A673 (cell line): ENCODE measurements at regions of chr3 and their contacts with region 1.

Region 1: GRCh38 chr3:131812421-131812820 is 222.4 kb downstream of the CPNE4 start:
- DNase-seq: peak; percentile 13
- H3K4me3 ChIP-seq: no peak overlapping the region
- H3K27ac ChIP-seq: no peak overlapping the region
- H3K4me1 ChIP-seq: peaks cover 15% of the 10 kb centered on the region
- H3K27me3 ChIP-seq: no peaks in the 10 kb centered on the region
- CTCF ChIP-seq: no peak

Region 2: DNA sequence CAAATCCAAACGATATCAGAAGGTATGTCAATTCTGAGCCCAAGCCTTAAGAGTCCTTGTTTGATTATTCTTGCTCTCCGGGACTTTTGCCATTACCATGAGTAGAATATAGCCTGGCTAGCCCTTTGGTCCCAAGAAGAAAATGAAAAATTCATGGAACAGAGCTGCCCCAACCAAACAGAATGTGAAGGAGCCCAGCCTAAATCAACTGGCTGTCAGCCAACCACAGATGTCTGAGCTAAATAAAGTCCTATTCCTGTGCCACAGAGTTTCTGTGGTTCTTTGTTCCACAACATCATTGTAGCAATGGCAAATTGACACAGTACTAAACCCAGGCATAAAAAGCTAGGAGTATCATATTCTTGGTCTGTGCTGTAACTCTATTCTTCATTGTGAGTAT is 37.2 kb after region 1 on chr3:
- CTCF ChIA-PET with region 1: no interaction called
- POLR2A ChIA-PET with region 1: no interaction called
- intact Hi-C with region 1: loop called (anchors 5 kb)
- DNase-seq: peak; percentile 44
- H3K4me3 ChIP-seq: no peak overlapping the region
- H3K27ac ChIP-seq: peak overlapping the region; percentile 97
- H3K4me1 ChIP-seq: peaks cover 76% of the 10 kb centered on the region
- H3K27me3 ChIP-seq: no peaks in the 10 kb centered on the region
- CTCF ChIP-seq: no peak

Region 3: GRCh38 chr3:132020058-132020457 is 207.6 kb after region 1 on chr3:
- CTCF ChIA-PET with region 1: no interaction called
- POLR2A ChIA-PET with region 1: no interaction called
- intact Hi-C with region 1: no loop called
- DNase-seq: no peak
- H3K4me3 ChIP-seq: no peak overlapping the region
- H3K27ac ChIP-seq: no peak overlapping the region
- H3K4me1 ChIP-seq: peaks cover 5% of the 10 kb centered on the region
- H3K27me3 ChIP-seq: no peaks in the 10 kb centered on the region
- CTCF ChIP-seq: no peak